GM10248 (cell line): ENCODE measurements at regions of chr12 and their contacts with region 1.

Region 1: DNA sequence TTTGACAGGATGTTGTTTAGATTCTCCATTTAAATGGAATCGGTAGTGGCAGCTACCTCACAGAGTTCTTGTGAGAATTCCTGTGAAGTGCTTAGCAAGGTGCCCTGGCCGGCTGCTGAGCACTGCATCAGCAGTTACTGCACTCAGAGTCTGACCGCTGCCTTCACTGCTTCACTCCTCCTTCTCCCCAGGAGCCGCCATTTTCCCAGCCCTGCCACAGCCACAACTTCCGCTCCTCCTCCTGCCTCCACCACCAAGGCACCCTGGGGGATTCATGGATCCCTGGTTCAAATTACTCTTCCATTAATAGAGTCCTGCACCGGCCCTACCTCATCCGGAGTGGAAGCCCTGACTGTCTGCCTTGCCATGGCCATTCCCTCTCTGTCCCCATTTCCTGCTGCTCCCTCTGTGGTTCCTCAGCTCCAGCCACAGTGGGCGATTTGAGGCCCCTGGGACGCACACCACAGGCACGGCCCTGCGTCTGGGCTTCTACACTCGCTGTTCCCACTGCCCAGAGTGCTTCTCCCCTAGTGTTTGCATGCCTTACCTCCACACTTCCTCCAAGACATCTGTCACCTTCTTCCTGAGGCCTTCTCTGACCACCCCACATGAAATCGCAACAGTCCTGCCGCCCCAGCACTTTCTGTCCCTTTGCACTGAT is 210.3 kb downstream of the IPO8 start:
- DNase-seq: no peak
- CTCF ChIP-seq: no peak

Region 2: DNA sequence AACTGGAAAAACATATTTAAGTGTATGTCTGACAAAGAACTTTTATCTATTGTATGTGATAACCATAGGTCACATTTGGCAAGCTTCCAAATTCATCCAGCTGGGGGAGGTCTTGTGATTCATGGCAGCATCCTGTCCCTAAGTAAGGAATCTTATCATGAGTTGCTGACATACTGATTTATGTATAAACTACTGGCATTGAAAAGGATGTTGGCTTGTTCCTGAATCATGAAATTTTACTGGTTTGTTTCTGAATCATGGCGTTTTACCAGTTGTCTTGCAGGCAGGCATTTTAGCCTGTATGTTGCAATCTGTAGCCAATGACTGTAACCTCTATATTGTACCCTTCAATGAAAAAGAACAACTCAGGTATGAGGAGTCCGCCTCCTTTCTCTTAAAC is 34.5 kb before region 1 on chr12:
- CTCF ChIA-PET with region 1: no interaction called
- POLR2A ChIA-PET with region 1: no interaction called
- DNase-seq: no peak
- CTCF ChIP-seq: no peak

Region 3: DNA sequence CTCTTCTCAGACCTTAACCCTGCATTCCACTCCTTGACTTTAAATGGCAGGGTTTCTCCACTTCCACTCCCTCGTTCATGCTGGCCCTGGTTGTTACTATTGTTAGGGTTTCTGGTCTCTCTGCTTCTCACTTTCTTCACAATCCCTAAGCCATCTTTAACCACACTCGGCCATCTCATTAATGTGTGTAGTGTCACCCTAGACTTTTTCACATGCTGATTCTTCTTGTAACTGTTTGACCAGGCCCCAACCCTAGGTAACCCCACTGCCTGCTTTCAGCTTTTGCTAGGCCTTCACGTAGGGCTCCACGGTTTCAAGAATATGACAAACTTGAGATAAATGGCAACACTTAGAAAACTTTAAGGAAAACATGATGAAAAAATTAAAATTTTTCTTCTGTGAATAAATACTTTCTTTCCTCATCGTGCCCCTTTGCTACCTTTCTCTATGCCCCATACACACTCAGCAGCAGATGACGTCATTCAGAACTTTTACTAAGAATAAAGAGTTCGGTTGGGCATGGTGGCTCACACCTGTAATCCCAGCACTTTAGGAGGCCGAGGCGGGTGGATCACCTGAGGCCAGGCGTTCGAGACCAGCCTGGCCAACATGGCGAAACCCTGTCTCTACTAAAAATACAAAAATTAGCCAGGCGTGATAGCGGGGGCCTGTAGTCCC is 15.3 kb after region 1 on chr12:
- CTCF ChIA-PET with region 1: interaction called, 10 read pairs
- POLR2A ChIA-PET with region 1: no interaction called
- DNase-seq: no peak
- CTCF ChIP-seq: no peak